B cell (primary cell): ENCODE measurements at regions of chr10 and their contacts with region 1.

Region 1: DNA sequence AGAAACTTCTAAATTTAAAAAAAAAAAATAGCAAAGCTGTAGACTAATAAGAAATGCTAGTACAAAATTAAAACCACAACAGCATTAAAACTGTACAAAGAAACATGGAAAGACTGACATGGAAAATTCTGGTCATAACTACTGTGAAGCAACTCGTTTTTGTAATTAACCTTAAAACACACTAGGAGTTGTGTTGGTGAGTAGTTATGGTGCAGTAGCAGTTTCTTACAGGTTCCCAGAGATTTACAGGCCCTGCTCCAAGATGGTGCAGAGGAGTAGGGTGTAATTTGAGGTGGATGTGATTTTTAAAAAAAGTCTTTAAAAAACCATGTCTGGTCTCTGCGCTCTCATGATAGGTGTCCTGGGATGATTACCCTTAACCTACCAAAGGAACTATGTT is 31.0 kb downstream of the TNKS2 start:
- DNase-seq: no peak
- ATAC-seq: no peak
- H3K4me3 ChIP-seq: no peak overlapping the region
- H3K4me3 Mint-ChIP-seq: no peak overlapping the region
- H3K27ac ChIP-seq: no peak overlapping the region
- H3K27ac Mint-ChIP-seq: no peak overlapping the region
- H3K4me1 ChIP-seq: no peaks in the 10 kb centered on the region
- H3K4me1 Mint-ChIP-seq: no peaks in the 10 kb centered on the region
- H3K27me3 ChIP-seq: no peaks in the 10 kb centered on the region
- H3K27me3 Mint-ChIP-seq: no peaks in the 10 kb centered on the region
- CTCF ChIP-seq: no peak

Region 2: DNA sequence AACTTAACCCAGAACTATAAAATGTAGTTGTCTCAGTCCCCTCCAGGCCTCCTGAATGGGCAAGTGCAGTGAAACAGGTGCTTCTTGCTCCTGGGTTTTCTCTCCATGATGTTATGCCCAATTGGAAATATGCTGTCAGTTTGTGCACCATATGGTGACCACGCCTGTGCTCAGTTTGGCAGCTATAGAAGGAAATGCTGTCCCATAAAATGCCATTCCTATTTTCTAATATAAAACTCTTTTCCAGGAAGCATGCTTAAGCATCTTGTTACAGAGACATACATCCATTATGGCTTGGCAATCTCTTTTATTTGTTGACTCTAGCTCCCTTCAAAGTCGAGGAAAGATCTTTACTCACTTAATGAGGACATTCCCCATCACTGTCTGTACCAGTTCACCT is 34.8 kb after region 1 on chr10:
- CTCF ChIA-PET with region 1: no interaction called
- POLR2A ChIA-PET with region 1: no interaction called
- intact Hi-C with region 1: loop called (anchors 5 kb)
- DNase-seq: no peak
- ATAC-seq: no peak
- H3K4me3 ChIP-seq: no peak overlapping the region
- H3K4me3 Mint-ChIP-seq: no peak overlapping the region
- H3K27ac ChIP-seq: no peak overlapping the region
- H3K27ac Mint-ChIP-seq: no peak overlapping the region
- H3K4me1 ChIP-seq: no peaks in the 10 kb centered on the region
- H3K4me1 Mint-ChIP-seq: no peaks in the 10 kb centered on the region
- H3K27me3 ChIP-seq: no peaks in the 10 kb centered on the region
- H3K27me3 Mint-ChIP-seq: no peaks in the 10 kb centered on the region
- CTCF ChIP-seq: no peak